Common myeloid progenitor, CD34-positive (primary cell): ENCODE measurements at regions of chr2 and their contacts with region 1.

Region 1: DNA sequence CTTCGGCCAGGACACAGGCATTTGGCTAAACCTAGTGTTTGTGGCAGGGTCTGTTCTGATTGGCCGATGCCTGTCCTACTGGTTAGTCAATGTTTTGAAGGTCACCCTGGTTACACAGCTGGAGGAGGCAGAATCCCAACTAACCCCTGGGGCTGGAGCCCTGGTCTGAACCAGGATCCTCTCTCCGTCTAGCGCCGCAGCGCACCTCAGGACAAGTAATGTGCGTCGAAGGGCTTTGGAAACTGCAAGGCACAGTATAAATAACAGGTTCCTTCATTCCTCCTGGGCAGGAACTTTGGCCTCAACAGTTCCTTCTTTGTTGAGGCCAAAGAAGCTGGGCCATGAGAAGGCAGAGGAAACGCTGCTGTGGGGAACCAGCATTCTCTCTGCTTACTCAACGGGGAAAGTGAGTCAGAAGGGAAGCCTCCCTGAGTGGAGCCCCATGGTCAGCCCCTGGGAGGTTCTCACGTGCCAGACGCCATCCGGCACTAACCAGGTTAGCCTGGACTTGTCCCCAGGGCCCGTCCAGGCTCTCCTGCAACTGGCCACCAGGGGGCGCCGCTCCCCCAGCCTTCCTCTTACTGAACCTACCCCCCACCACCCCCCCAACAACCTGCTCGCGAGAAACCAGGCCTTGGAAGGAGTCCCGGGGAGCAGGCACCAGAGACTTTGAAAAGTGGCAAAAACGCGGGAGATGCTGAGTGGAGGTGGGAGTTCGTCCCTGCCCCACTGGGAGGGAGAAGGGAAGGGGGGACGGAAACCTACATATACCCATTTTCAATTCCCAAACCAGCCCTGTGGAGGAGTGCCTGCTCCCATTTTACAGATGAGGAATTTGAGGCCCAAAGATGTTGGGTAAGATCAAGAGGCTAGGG is 19.8 kb downstream of the TEX44 start:
- DNase-seq: peak; percentile 89 to 94 (median 93)
- H3K4me3 ChIP-seq: peak overlapping the region in 2 of 7 experiments; percentile 68 to 78
- H3K27ac ChIP-seq: peak overlapping the region; percentile 94 to 96
- H3K4me1 ChIP-seq: peaks cover 3 to 63% (median 55%) of the 10 kb centered on the region in 4 experiments
- H3K27me3 ChIP-seq: no peaks in the 10 kb centered on the region

Region 2: DNA sequence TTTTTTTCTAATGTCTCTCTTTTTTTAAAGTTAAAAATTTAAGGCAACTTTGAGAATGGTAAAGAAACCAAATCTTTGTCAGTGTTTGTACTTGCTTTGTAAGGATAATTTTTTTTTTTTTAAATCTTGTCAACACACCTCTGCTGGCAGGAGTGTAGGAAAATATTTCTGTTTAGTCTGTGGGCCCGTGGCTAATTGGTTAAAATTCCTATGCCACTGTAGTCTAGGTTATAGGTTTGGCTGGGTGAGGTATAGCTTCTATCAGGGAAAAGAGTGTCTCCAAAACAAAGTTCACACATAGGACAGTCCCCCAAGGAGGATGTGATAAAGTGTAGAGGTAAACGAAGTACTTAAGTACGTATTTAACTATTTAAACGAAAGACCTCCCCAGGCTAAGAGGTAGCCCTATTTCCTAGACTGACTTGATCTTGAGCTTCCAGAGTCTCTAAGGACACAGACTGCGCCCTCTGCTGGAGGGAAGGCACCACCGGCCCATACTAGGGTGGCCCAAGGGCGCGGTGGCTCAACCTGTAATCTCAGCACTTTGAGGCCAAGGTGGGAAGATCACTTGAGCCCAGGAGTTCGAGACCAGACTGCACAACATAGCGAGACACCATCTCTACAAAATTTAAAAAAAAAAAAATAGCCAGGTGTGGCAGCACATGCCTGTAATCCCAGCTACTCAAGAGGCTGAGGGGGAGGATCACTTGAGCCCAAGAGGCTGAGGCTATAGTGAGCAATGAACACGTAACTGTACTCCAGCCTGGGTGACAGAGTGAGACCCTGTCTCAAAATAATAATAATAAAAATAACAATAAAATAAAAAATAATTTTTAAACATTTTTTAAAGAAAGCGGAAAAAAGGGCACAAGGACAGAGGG is 10.8 kb before region 1 on chr2:
- CTCF ChIA-PET with region 1: interaction called, 15 read pairs
- POLR2A ChIA-PET with region 1: no interaction called
- DNase-seq: peak; percentile 81 to 87 (median 83)
- H3K4me3 ChIP-seq: no peak overlapping the region
- H3K27ac ChIP-seq: no peak overlapping the region
- H3K4me1 ChIP-seq: peaks cover 0 to 19% (median 17%) of the 10 kb centered on the region in 4 experiments
- H3K27me3 ChIP-seq: peaks cover 0 to 2% (median 0%) of the 10 kb centered on the region in 5 experiments

Region 3: GRCh38 chr2:231642631-231643494 is 30.4 kb after region 1 on chr2:
- CTCF ChIA-PET with region 1: interaction called, 49 read pairs
- POLR2A ChIA-PET with region 1: interaction called, 32 read pairs
- DNase-seq: peak; percentile 65 to 77 (median 76)
- H3K4me3 ChIP-seq: peak overlapping the region in 6 of 7 experiments; percentile 4 to 77 (median 60)
- H3K27ac ChIP-seq: peak overlapping the region; percentile 40 to 57
- H3K4me1 ChIP-seq: peaks cover 0 to 53% (median 33%) of the 10 kb centered on the region in 4 experiments
- H3K27me3 ChIP-seq: no peaks in the 10 kb centered on the region

Region 4: GRCh38 chr2:231662028-231662810 is 49.8 kb after region 1 on chr2:
- CTCF ChIA-PET with region 1: interaction called, 318 read pairs
- POLR2A ChIA-PET with region 1: interaction called, 8 read pairs
- DNase-seq: peak; percentile 96 to 98 (median 98)
- H3K4me3 ChIP-seq: peak overlapping the region; percentile 13 to 75 (median 51)
- H3K27ac ChIP-seq: peak overlapping the region in 1 of 2 experiments; percentile 81
- H3K4me1 ChIP-seq: peaks cover 5 to 55% (median 47%) of the 10 kb centered on the region in 4 experiments
- H3K27me3 ChIP-seq: no peaks in the 10 kb centered on the region

Region 5: DNA sequence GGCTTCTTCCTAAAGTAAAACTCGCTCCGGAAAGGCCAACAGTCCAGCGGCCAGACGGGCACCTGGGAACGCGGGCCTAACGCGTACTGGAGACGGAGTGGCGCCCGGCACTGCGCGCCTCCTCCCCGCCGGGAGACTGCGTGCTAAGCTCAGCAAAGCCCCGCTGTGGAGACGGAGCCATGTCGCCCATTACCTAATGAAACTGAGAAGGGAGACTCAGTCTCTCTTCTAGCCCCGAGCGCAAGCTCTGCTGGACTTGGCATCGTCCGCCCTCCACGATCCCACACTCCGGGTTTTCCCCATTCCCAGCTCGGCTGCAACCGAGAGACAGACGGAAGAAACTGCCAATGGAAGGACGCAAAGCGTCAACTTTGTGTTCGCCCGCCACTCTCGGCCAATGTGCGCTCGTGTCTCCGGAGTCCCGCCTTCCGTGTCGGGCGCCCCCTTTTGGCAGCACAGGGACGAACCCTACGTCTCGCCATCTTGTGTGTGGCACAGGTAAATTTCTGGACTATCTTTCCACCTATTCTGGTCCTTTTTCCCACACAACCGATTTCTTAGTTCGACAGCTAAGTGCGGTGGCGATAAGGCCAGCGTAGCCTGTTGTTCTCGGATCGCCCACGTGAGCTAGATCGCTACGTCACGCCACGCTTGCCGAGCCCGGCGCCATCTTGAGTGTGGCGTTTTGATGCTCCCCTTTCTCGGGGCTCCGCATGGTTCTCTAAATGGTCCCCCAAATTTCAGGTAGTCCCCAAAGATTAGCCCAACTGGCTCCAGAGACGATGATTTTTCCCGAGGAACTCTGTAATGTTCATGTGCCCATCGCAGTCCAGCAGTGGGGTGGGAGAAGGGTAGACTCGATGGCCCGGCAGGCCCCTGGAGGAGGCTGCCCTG is 94.6 kb after region 1 on chr2:
- CTCF ChIA-PET with region 1: interaction called, 176 read pairs
- POLR2A ChIA-PET with region 1: interaction called, 21 read pairs
- DNase-seq: peak; percentile 97 to 99 (median 99)
- H3K4me3 ChIP-seq: peak overlapping the region; percentile 74 to 97 (median 86)
- H3K27ac ChIP-seq: peak overlapping the region; percentile 100
- H3K4me1 ChIP-seq: peaks cover 8 to 37% (median 31%) of the 10 kb centered on the region in 4 experiments
- H3K27me3 ChIP-seq: no peaks in the 10 kb centered on the region